ENCODE measurements at regions of chr12 and their contacts with region 1.

Region 1: DNA sequence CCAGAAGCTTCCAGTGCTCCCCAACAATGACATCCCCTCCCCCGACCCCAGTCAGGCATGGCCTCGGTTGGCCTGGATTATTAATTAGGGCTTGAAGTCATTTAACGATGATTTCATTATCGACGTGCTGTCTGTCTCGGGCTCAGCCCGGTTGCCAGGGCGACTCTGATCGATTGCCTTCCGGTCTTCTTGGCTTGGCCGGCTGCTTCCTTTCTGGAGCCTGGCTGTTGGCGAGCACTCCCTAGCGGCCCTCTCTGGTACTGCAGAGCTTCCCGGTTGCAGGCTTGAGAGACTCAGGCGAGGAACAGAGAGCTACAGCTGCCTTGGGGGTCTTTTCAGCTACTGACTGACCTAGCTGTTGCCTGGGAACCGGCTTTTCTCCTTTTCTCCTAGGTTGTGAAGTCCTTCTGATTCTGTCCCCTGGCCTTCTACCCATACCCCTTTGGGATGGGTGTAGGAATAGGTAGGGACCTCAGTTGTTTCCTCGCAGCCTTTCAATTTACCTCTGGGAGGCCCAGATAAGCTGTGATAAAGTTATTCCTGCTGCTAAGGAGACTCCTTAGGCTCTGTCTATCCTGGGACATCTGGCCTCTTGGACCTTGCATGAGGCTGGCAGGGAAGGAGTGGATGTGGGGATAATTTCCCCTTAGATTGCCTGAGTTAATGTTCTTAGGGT is 5.5 kb upstream of the CISTR start:
- DNase-seq: no peak
- H3K4me3 ChIP-seq: no peak overlapping the region
- H3K27ac ChIP-seq: no peak overlapping the region
- H3K27me3 ChIP-seq: peaks cover 46% of the 10 kb centered on the region
- CTCF ChIP-seq: peak; percentile 92

Region 2: DNA sequence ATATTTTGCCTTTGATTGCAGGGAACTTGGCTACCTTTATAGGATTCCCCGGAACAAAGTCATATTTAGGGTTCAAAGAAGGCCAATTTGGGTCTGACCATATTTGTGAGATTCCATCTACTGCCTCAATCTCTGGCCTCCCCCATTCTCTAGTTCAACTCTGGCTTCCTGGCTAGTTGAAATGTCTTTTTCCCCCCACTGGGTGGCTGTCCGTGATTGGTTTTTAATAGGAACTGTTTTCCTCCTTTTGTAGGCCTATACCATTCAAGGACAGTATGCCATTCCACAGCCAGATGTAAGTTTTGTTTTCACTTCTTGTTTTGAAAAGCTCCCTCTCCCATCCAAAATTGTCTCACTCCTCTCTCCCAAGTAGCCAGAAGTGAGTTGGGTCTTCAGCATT is 291.6 kb before region 1 on chr12:
- CTCF ChIA-PET with region 1: no interaction called
- POLR2A ChIA-PET with region 1: no interaction called
- DNase-seq: no peak
- H3K4me3 ChIP-seq: no peak overlapping the region
- H3K27ac ChIP-seq: no peak overlapping the region
- H3K27me3 ChIP-seq: no peaks in the 10 kb centered on the region
- CTCF ChIP-seq: 0 out of 2 replicates have a peak, but pooled peaks have one; percentile 4

Region 3: GRCh38 chr12:53770281-53770680 is 13.0 kb after region 1 on chr12:
- CTCF ChIA-PET with region 1: interaction called, 15 read pairs
- POLR2A ChIA-PET with region 1: no interaction called
- DNase-seq: peak; percentile 84
- H3K4me3 ChIP-seq: no peak overlapping the region
- H3K27ac ChIP-seq: peak overlapping the region; percentile 3
- H3K27me3 ChIP-seq: no peaks in the 10 kb centered on the region
- CTCF ChIP-seq: no peak

Measured in AG04450 (cell line).